Activated CD8-positive, alpha-beta T cell treated with anti-CD3 and anti-CD28 coated beads for 36 hours (primary cell): ENCODE measurements at regions of chr5 and their contacts with region 1.

Region 1: GRCh38 chr5:57509501-57510260 is 27.1 kb upstream of the ACTBL2 start:
- DNase-seq: no peak
- ATAC-seq: no peak
- H3K4me3 Mint-ChIP-seq: no peak overlapping the region
- H3K27ac Mint-ChIP-seq: no peak overlapping the region
- H3K4me1 Mint-ChIP-seq: peaks cover 2% of the 10 kb centered on the region
- H3K27me3 Mint-ChIP-seq: peaks cover 13% of the 10 kb centered on the region
- CTCF ChIP-seq: no peak

Region 2: GRCh38 chr5:57499262-57500050 is 10.2 kb before region 1 on chr5:
- CTCF ChIA-PET with region 1: interaction called, 13 read pairs
- POLR2A ChIA-PET with region 1: interaction called, 3 read pairs
- intact Hi-C with region 1: no loop called
- DNase-seq: peak; percentile 16
- ATAC-seq: peak; percentile 46
- H3K4me3 Mint-ChIP-seq: no peak overlapping the region
- H3K27ac Mint-ChIP-seq: no peak overlapping the region
- H3K4me1 Mint-ChIP-seq: peaks cover 21% of the 10 kb centered on the region
- H3K27me3 Mint-ChIP-seq: no peaks in the 10 kb centered on the region
- CTCF ChIP-seq: peak; percentile 66